ENCODE measurements at regions of chr2 and their contacts with region 1.

Region 1: DNA sequence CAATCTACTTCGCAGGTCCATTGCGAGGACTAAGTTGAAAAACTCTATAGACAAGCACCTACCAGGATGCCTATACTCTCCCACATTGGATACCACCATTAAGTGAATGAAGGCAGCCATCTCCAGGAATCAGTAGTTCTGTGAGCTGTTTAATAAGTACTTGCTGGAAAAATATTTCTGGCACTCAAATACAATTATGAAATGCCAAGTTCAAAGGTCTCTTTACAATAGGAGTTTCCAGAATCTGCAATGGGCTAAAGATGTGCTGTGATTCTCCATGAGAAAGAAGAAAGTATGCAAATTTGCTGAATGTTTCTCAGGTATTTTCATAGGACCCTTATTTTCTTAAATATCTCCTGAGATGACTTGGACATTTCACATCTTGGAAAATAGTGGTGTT is 103.0 kb downstream of the AP1S3 start:
- DNase-seq: no peak
- H3K4me3 ChIP-seq: no peak overlapping the region
- H3K4me3 Mint-ChIP-seq: no peak overlapping the region
- H3K27ac Mint-ChIP-seq: no peak overlapping the region
- H3K4me1 ChIP-seq: peaks cover 5% of the 10 kb centered on the region; the same call in 1 of the 2 replicates
- H3K4me1 Mint-ChIP-seq: no peaks in the 10 kb centered on the region
- H3K27me3 ChIP-seq: no peaks in the 10 kb centered on the region
- H3K27me3 Mint-ChIP-seq: no peaks in the 10 kb centered on the region
- CTCF ChIP-seq: no peak

Region 2: DNA sequence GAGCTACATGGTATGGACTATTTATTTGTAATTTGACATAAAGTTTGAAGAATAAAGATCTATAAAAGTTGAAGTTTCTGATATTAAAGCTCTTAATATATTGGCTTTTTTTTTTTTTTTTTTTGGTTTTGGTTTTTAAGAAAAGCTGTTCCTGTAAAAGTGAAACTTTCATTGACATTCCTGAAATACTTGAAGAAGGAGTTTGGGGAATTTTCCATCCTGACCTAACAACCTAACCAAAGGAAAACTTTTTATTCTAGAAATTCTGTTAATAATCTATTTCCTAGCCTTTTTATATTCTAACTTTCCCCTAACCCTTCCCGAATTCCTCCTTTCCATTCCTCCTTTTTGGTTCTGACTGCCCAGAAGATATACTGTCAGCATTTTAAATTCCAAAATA is 789.8 kb before region 1 on chr2:
- CTCF ChIA-PET with region 1: no interaction called
- POLR2A ChIA-PET with region 1: interaction called, 13 read pairs
- intact Hi-C with region 1: no loop called
- DNase-seq: no peak
- H3K4me3 ChIP-seq: no peak overlapping the region
- H3K4me3 Mint-ChIP-seq: no peak overlapping the region
- H3K27ac Mint-ChIP-seq: peak overlapping the region; percentile 6
- H3K4me1 ChIP-seq: peaks cover 19% of the 10 kb centered on the region
- H3K4me1 Mint-ChIP-seq: peaks cover 23% of the 10 kb centered on the region
- H3K27me3 ChIP-seq: no peaks in the 10 kb centered on the region
- H3K27me3 Mint-ChIP-seq: no peaks in the 10 kb centered on the region
- CTCF ChIP-seq: no peak

Measured in Caco-2 (cell line).